ENCODE measurements at regions of chr9 and their contacts with region 1.

Region 1: GRCh38 chr9:4662108-4662988 is at the start of gene PLPP6:
- DNase-seq: peak; percentile 92 to 94
- H3K4me3 ChIP-seq: peak within 1 kb of the TSS; percentile 83 to 89
- H3K27ac ChIP-seq: peak within 1 kb of the TSS; percentile 81 to 89
- H3K4me1 ChIP-seq: peaks cover 0 to 47% (median 28%) of the 10 kb centered on the region in 4 donors
- H3K27me3 ChIP-seq: no peaks in the 10 kb centered on the region
- CTCF ChIP-seq: peak; percentile 58

Region 2: DNA sequence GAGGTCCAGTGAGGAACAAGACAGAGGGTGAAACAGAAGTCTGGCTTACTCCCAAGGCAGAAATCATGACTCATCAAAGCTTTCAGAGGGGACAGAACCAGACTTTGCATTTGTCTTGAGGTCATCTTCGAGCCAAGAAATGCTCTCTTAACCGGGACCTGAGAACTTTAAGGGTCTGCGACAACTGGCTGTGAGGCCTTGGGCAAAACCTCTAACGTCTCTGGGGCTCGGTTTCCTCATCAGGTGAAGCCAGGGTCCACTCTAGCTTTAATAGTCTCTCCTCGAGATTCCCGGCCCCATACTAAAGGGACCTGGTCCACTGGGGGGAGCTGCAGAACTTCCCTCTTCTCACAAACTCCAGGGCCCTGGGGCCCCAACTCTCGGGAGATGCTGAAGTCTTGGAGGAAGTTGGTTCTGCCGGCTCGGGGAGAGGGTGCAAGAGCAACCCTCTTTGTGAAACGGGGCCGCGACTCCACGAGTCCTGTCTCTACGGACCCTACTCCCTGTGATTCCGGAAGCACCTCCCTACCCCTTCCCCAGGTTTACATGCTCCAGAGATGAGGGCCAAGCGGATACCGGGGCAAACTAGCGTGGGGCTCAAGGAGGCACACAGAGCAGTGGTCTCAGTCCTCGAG is 365.1 kb before region 1 on chr9:
- intact Hi-C with region 1: loop called (anchors 10 kb)
- DNase-seq: peak; percentile 89 to 93
- H3K4me3 ChIP-seq: peak overlapping the region; percentile 69 to 87
- H3K27ac ChIP-seq: peak overlapping the region; percentile 96 to 97
- H3K4me1 ChIP-seq: peaks cover 0 to 45% (median 17%) of the 10 kb centered on the region in 4 donors
- H3K27me3 ChIP-seq: no peaks in the 10 kb centered on the region
- CTCF ChIP-seq: peak in 1 of 2 experiments; percentile 46

Region 3: GRCh38 chr9:4740638-4741364 is 78.5 kb after region 1 on chr9 and contains the start of gene AK3:
- intact Hi-C with region 1: loop called (anchors 5 kb)
- DNase-seq: peak; percentile 85 to 91
- H3K4me3 ChIP-seq: peak within 1 kb of the TSS; percentile 94 to 95
- H3K27ac ChIP-seq: peak within 1 kb of the TSS; percentile 85 to 95
- H3K4me1 ChIP-seq: peaks cover 0 to 16% (median 12%) of the 10 kb centered on the region in 4 donors
- H3K27me3 ChIP-seq: no peaks in the 10 kb centered on the region
- CTCF ChIP-seq: peak; percentile 10 to 32

Measured in tibial artery (tissue), 4 donors.